ENCODE measurements at regions of chr5 and their contacts with region 1.

Region 1: DNA sequence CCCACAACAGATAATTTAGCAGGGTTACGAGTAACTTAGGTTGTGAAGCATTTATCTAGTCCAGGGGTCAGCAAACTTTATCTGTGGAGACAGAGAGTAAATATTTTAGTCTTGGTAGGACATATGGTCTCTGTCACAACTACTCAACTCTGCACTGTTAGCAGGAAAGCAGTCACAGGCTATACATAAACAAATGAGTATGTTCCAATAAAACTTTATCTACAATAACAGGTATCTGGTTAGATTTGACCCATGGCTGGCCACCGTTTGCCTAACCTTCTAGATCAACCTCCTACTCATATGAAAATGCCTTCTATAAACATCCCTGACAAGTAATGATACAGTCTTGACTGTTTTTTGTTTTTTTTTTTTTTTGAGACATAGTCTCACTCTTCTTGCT is 13.0 kb upstream of the HK3 start:
- DNase-seq: no peak

Region 2: GRCh38 chr5:177327539-177328522 is 415.7 kb after region 1 on chr5:
- intact Hi-C with region 1: loop called in 1 of 2 experiments (anchors 5 kb)
- DNase-seq: peak; percentile 90